ENCODE measurements at regions of chr2 and their contacts with region 1.

Region 1: DNA sequence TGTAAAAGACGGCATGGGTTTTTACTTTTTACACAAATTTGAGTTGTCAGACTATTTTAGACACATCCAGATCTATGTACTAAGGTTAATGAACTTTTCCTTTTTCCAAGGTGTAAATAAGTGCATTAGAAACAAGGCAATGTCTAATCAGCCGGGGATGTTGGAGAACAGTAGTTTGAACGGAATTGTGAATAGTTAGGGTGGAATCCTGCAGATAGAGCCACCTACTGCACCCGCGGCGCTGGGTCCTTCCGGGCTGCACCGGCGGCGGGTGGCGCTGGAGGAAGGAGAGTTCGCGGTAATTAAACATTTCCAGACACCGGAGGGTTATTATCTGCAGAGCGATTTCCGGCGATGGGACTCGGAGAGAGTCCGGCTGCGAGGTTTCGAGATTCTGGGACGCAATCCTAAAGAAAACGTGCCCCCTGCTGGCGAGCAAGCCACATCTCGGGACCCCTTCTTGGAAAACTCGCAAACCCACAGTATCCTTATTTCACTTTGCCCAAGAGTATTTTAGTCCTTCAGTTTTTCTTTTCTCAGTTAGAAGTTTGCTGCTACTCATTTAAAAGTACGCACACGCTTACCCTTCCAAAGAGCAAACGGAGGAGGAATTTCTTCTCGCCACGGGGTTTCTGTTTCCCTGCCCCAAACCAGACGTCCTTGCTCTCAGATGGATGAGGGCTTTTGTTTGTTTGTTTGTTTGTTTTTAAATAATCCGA is 4.5 kb upstream of the OSR1 start:
- DNase-seq: peak; percentile 90
- ATAC-seq: peak; percentile 70
- H3K4me3 ChIP-seq: peak overlapping the region; percentile 89
- H3K27ac ChIP-seq: peak overlapping the region; percentile 21
- H3K4me1 ChIP-seq: peaks cover 23% of the 10 kb centered on the region
- H3K27me3 ChIP-seq: no peaks in the 10 kb centered on the region
- CTCF ChIP-seq: peak; percentile 89

Region 2: GRCh38 chr2:18435421-18436037 is 927.4 kb before region 1 on chr2:
- CTCF ChIA-PET with region 1: no interaction called
- POLR2A ChIA-PET with region 1: no interaction called
- intact Hi-C with region 1: loop called (anchors 1 kb)
- DNase-seq: peak; percentile 82
- ATAC-seq: peak; percentile 61
- H3K4me3 ChIP-seq: no peak overlapping the region
- H3K27ac ChIP-seq: no peak overlapping the region
- H3K4me1 ChIP-seq: peaks cover 17% of the 10 kb centered on the region
- H3K27me3 ChIP-seq: no peaks in the 10 kb centered on the region
- CTCF ChIP-seq: peak; percentile 86

Region 3: GRCh38 chr2:18749912-18750526 is 612.9 kb before region 1 on chr2:
- CTCF ChIA-PET with region 1: no interaction called
- POLR2A ChIA-PET with region 1: no interaction called
- intact Hi-C with region 1: loop called (anchors 1 kb)
- DNase-seq: peak; percentile 74
- ATAC-seq: no peak
- H3K4me3 ChIP-seq: no peak overlapping the region
- H3K27ac ChIP-seq: no peak overlapping the region
- H3K4me1 ChIP-seq: peaks cover 35% of the 10 kb centered on the region
- H3K27me3 ChIP-seq: no peaks in the 10 kb centered on the region
- CTCF ChIP-seq: peak; percentile 83

Region 4: DNA sequence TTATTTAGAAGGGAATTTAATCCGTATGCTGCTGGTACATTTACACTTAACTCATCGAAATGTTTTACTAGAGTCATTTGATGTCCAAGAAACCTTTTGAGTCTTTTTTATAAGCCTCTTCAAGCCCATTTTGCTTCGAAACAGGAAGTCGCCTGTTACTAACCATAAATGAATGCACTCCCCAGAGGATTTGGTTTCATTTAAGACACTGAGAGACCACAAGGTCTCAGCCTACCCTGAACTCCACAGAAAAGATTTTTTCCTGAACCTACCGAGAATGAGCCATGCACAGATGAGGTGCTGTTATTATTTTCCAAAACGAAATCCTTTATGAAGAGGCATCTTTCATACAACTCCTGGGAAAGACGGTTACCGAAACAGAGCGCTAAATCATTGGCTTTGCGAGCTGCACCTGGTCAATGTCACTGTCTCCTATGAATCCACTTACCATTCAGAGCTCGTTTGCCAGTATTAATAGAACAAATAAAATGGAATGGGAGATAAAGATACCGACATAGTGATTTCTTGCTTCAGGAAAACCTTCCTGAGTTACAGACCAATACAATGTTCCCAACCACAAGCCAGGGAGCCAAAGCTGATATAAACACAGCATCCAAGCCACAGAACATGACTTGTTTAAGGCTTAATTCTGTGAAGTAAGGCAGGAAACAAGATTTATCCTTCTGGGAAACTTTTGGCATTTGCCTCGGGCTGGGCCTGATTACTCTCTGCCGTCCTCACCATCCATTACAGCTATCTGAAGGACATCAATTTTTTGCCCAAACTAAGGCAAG is 386.5 kb before region 1 on chr2:
- CTCF ChIA-PET with region 1: no interaction called
- POLR2A ChIA-PET with region 1: no interaction called
- intact Hi-C with region 1: loop called (anchors 5 kb)
- DNase-seq: peak; percentile 89
- ATAC-seq: peak; percentile 81
- H3K4me3 ChIP-seq: peak overlapping the region; percentile 14
- H3K27ac ChIP-seq: peak overlapping the region; percentile 64
- H3K4me1 ChIP-seq: peaks cover 30% of the 10 kb centered on the region
- H3K27me3 ChIP-seq: no peaks in the 10 kb centered on the region
- CTCF ChIP-seq: no peak

Region 5: GRCh38 chr2:19098467-19099159 is 264.3 kb before region 1 on chr2:
- CTCF ChIA-PET with region 1: no interaction called
- POLR2A ChIA-PET with region 1: no interaction called
- intact Hi-C with region 1: loop called (anchors 2 kb)
- DNase-seq: peak; percentile 78
- ATAC-seq: peak; percentile 59
- H3K4me3 ChIP-seq: no peak overlapping the region
- H3K27ac ChIP-seq: peak overlapping the region; percentile 28
- H3K4me1 ChIP-seq: peaks cover 56% of the 10 kb centered on the region
- H3K27me3 ChIP-seq: no peaks in the 10 kb centered on the region
- CTCF ChIP-seq: no peak

Region 6: DNA sequence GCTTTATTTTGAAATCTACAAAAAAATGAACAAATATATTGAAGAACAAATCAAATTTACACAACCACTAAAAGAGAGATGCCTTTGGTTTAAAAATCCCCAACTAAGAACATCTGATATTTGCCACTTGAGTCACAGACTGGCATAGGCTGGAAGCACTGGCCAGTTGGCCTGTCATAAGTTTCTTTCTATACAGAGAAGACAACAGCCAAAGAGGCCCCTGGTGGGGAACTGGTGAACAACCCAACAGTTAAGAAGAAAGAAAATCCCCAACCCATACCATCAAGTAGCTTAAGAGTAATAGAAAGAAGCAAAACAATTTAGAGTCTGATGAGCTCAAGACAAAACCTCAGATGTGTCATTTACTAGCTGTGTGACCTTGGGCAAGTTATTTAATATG is 50.0 kb before region 1 on chr2:
- CTCF ChIA-PET with region 1: no interaction called
- POLR2A ChIA-PET with region 1: no interaction called
- intact Hi-C with region 1: loop called (anchors 5 kb)
- DNase-seq: peak; percentile 61
- ATAC-seq: peak; percentile 84
- H3K4me3 ChIP-seq: no peak overlapping the region
- H3K27ac ChIP-seq: no peak overlapping the region
- H3K4me1 ChIP-seq: no peaks in the 10 kb centered on the region
- H3K27me3 ChIP-seq: no peaks in the 10 kb centered on the region
- CTCF ChIP-seq: peak; percentile 64

Region 7: DNA sequence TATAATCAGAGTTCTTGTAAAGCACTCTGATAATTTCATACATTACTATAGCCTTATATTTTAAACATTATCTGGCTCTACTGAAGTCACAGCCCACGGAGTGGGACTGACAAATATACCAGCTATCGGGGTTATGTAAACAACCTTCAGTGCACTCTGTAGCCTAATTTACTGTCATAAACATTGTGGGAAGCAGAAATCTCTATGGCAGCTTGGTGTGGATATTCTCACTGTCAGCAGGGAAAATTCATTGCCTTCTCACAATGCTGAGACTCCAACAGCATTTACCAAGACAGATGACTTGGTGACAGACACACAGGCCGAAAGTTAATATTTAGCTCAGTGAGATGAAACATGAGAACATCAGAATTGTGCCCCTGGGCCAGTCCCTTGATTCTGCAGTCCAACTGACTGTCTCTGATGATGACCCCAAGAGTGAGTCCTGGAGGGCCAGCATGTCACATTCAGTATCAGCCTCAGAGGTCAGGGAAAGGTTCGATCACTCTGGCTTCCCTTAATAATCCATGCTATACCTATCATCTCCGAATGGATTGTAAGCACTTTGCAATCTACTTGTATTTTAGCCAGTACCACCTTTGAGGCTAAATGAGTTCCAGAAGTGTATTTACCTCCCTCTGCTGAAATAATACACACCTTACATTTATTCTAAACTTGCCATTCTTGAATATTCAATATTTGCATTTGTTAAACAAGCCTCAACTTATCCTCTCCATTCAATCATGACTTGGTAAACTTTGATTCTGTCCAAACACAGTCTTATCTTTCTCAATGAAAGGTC is 141.7 kb after region 1 on chr2:
- CTCF ChIA-PET with region 1: no interaction called
- POLR2A ChIA-PET with region 1: no interaction called
- intact Hi-C with region 1: no loop called
- DNase-seq: peak; percentile 20
- ATAC-seq: peak; percentile 38
- H3K4me3 ChIP-seq: no peak overlapping the region
- H3K27ac ChIP-seq: no peak overlapping the region
- H3K4me1 ChIP-seq: peaks cover 18% of the 10 kb centered on the region
- H3K27me3 ChIP-seq: no peaks in the 10 kb centered on the region
- CTCF ChIP-seq: no peak

Measured in PC-3 (cell line).